ENCODE measurements at regions of chrX and their contacts with region 1.

Region 1: DNA sequence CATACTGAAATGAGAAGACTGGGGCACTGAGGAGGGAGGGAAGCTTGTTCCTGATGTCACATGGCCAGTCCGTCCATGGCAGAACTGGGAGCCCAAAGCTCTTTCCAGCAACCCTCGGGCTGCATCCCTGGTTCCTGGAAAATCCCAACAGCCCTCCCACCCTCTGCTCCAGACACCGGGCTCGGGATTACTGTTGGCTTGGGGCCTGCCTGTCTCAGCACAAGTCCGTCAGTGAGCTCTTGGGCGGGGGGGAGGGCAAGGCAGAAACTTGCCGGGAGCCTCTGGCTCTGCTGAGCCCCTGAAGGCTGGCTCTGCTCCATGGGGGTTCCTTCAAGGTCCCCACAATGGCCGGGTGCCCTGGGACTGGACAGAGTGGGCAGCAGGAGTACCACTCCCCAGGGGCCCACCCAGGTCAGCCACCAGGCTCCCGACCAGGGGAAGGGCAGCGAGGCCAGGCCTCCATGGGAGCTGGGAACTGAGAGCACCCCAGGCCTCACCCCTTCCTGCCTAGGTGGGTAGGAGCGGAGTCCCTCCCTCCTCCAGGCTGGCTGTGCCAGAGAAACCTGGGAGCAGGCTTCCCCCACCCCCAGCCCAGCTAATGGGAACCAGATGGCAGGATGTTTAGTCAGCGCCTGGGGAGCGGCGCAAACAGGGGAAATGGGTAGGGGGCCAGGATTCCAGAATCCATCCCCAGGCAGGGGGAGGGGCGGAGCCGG is 6.4 kb upstream of the HAUS7 start:
- DNase-seq: peak; percentile 87
- H3K4me3 ChIP-seq: no peak overlapping the region
- H3K27ac ChIP-seq: peak overlapping the region; percentile 73
- H3K4me1 ChIP-seq: peaks cover 28% of the 10 kb centered on the region
- H3K27me3 ChIP-seq: no peaks in the 10 kb centered on the region
- CTCF ChIP-seq: no peak
- POLR2A ChIP-seq: no peak

Region 2: DNA sequence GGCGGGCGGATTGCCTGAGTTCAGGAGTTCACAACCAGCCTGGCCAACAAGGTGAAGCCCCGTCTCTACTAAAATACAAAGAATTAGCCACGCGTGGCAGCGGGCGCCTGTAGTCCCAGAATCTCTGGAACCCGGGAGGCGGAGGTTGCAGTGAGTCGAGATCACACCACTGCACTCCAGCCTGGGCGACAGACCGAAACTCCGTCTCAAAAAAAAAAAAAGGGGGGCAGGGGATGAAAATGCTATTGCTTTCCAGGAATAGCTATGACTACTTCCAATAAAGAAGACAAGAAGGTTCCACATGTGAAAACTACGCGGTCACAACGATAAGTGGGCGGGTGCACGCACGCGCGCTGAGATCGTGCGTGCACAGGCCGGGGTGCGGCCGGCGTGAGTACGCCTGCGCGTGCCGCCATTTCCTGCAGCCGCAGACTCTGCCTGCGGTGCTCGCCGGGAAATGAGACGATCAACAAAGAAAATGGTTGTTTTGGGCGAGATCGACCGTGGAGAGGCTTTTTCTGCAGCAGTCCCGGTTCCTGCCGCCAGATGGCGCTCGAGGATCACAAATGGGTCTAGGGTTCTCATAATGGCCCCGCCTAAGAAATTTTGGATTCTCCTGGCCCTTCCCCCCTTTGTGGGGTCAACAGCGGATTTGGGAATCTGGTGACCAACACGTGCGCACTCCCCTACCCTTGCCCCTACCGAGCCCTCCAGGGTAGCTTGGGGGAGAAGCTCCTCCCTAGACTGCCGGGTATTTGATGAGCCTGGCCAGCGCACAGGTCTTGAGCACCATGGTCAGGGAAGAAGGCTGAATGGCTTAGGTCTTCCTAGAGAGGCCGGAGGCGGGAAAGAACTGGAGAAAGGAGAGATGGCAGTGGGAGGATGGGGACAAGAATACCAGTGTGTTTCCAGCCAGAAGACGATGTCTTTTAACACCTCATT is 518.0 kb before region 1 on chrX:
- CTCF ChIA-PET with region 1: no interaction called
- POLR2A ChIA-PET with region 1: no interaction called
- dilution Hi-C with region 1: no loop called
- intact Hi-C with region 1: no loop called
- DNase-seq: peak; percentile 89
- H3K4me3 ChIP-seq: peak overlapping the region in 1 of 3 experiments; percentile 9
- H3K27ac ChIP-seq: peak overlapping the region; percentile 9
- H3K4me1 ChIP-seq: no peaks in the 10 kb centered on the region
- H3K27me3 ChIP-seq: no peaks in the 10 kb centered on the region
- CTCF ChIP-seq: peak; percentile 70 to 71
- POLR2A ChIP-seq: peak; percentile 60

Region 3: DNA sequence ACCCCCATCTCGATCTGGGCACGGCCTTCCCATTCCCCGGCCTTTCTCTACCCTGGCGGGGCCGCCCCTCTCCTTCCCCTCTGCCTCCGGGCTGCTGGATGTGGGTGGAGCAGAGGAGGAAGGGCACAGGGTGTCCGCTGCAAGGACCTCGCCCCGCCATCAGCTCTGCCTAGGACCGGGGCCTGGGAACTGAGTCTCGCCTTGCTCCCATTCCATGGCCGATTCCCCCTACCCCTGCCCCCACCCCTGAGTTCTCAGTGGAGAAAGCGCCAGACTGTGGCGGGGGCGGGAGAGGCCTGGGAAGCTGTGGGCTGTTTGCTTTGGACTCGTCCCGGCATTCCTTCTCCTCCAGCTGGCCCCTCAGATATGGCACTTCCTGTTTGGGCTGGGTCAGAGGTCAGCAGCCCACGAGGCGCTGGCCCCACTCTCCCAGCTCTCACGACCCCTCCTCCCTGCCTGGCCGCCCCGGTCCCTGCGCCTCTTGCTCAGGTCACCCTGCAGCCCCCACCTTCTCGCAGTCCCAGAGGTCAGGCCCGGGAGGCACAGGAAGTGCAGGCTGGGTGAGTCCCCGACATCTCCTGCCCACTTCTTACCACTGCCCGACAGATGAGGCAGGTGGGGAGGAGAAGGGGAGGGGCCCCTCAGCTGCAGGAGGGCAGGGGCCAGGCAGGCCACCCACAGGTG is 11.6 kb after region 1 on chrX:
- CTCF ChIA-PET with region 1: interaction called, 189 read pairs
- POLR2A ChIA-PET with region 1: interaction called, 7 read pairs
- dilution Hi-C with region 1: no loop called
- intact Hi-C with region 1: loop called (anchors 1 kb)
- DNase-seq: peak; percentile 91
- H3K4me3 ChIP-seq: no peak overlapping the region
- H3K27ac ChIP-seq: peak overlapping the region; percentile 80
- H3K4me1 ChIP-seq: peaks cover 47% of the 10 kb centered on the region
- H3K27me3 ChIP-seq: no peaks in the 10 kb centered on the region
- CTCF ChIP-seq: no peak
- POLR2A ChIP-seq: no peak

Region 4: GRCh38 chrX:153494541-153495361 is 17.9 kb after region 1 on chrX and contains the start of gene BGN:
- CTCF ChIA-PET with region 1: interaction called, 189 read pairs
- POLR2A ChIA-PET with region 1: interaction called, 9 read pairs
- dilution Hi-C with region 1: no loop called
- intact Hi-C with region 1: no loop called
- DNase-seq: peak; percentile 81
- H3K4me3 ChIP-seq: peak within 1 kb of the TSS; percentile 10 to 78 (median 65)
- H3K27ac ChIP-seq: peak within 1 kb of the TSS; percentile 80
- H3K4me1 ChIP-seq: peaks cover 34% of the 10 kb centered on the region
- H3K27me3 ChIP-seq: no peaks in the 10 kb centered on the region
- CTCF ChIP-seq: peak; percentile 30 to 48
- POLR2A ChIP-seq: peak; percentile 75
- total RNA-seq, gene BGN: 453 and 479 TPM in 2 replicates